ENCODE measurements at regions of chr1 and their contacts with region 1.

Region 1: DNA sequence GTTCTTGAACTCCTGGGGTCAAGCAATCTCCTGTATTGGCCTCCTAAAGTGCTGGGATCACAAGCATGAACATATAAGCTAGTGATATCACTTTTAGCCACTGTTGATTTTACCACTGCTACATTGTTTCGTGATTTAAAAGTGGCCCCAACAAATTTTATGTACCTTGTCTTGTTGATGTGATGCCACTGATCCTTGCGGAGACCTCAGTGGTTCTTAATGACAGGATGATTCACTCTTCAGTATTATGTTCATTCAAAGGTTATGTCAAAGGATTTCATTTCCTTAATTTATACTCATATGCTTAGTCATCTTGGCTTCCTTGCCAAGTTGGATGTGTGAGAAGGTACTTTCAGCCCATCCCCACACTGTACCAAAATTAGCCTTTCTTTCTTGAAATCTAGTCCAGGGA is 12.1 kb downstream of the PRKACB start:
- DNase-seq: peak in 1 of 9 experiments; percentile 56
- ATAC-seq: peak; percentile 64
- H3K4me3 ChIP-seq: no peak overlapping the region
- H3K4me3 Mint-ChIP-seq: peak overlapping the region; percentile 19
- H3K27ac ChIP-seq: peak overlapping the region in 1 of 2 experiments; percentile 17
- H3K27ac Mint-ChIP-seq: peak overlapping the region; percentile 60
- H3K4me1 ChIP-seq: peaks cover 72% of the 10 kb centered on the region
- H3K4me1 Mint-ChIP-seq: peaks cover 93% of the 10 kb centered on the region
- H3K27me3 ChIP-seq: no peaks in the 10 kb centered on the region
- H3K27me3 Mint-ChIP-seq: no peaks in the 10 kb centered on the region
- CTCF ChIP-seq: no peak

Region 2: DNA sequence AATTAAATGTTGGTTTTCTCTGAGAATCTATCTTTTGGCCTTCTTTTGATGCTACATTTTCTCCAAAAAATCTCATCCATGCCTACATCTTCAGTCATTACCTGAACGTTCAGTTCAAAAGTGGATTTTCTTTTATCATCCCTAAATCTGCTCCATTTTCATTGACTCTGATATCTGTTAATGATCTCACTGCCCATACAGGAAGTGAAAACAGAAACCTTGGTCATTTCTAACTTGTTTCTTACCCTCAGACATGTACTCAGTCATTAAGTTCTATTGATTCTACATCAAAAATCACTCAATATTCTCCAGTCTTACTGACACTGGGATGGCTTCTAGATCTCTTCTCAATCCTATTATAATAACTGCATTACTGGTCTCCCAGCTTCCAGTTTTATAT is 10.6 kb after region 1 on chr1:
- CTCF ChIA-PET with region 1: no interaction called
- POLR2A ChIA-PET with region 1: interaction called, 7 read pairs
- intact Hi-C with region 1: loop called in 1 of 2 experiments (anchors 2 kb)
- DNase-seq: peak in 1 of 9 experiments; percentile 38
- ATAC-seq: no peak
- H3K4me3 ChIP-seq: no peak overlapping the region
- H3K4me3 Mint-ChIP-seq: peak overlapping the region; percentile 59
- H3K27ac ChIP-seq: peak overlapping the region in 1 of 2 experiments; percentile 65
- H3K27ac Mint-ChIP-seq: peak overlapping the region; percentile 56
- H3K4me1 ChIP-seq: peaks cover 63% of the 10 kb centered on the region
- H3K4me1 Mint-ChIP-seq: peaks cover 86% of the 10 kb centered on the region
- H3K27me3 ChIP-seq: no peaks in the 10 kb centered on the region
- H3K27me3 Mint-ChIP-seq: no peaks in the 10 kb centered on the region
- CTCF ChIP-seq: no peak

Measured in CD8-positive, alpha-beta T cell (primary cell).